ENCODE measurements at regions of chr2 and their contacts with region 1.

Region 1: DNA sequence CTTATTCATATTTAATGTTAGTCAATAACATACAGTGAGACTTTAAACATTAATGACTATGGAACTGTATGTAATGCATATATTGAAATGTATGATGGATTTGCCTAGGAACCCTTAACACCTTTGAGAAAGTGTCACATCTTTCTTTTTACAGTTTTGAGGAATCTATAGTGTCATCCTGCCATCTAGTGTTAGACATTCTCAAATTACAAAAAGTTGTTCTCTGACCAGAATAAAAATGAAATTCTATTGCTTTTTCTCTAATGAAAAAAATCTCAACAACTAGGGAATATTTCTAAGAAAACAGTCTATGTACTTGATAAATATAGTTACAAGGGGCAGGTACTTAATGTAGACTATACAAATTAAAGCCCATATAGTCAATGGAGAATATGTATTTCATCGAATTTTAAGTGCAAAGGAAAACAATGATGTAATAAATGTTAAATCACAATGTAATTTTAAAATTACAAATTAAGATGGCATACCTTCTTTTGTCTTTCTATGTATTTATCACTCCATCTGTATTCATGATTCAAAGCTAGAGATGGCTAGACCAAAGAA is 5.1 kb upstream of the CALCRL start:
- DNase-seq: peak in 1 of 9 experiments; percentile 18
- ATAC-seq: no peak
- H3K4me3 ChIP-seq: no peak overlapping the region
- H3K4me3 Mint-ChIP-seq: no peak overlapping the region
- H3K27ac ChIP-seq: no peak overlapping the region
- H3K27ac Mint-ChIP-seq: no peak overlapping the region
- H3K4me1 ChIP-seq: no peaks in the 10 kb centered on the region
- H3K4me1 Mint-ChIP-seq: peaks cover 3% of the 10 kb centered on the region
- H3K27me3 ChIP-seq: no peaks in the 10 kb centered on the region
- H3K27me3 Mint-ChIP-seq: no peaks in the 10 kb centered on the region
- CTCF ChIP-seq: no peak

Region 2: GRCh38 chr2:186518945-186519344 is 934.2 kb before region 1 on chr2:
- CTCF ChIA-PET with region 1: no interaction called
- POLR2A ChIA-PET with region 1: no interaction called
- intact Hi-C with region 1: loop called in 1 of 2 experiments (anchors 5 kb)
- DNase-seq: no peak
- ATAC-seq: no peak
- H3K4me3 ChIP-seq: no peak overlapping the region
- H3K4me3 Mint-ChIP-seq: no peak overlapping the region
- H3K27ac ChIP-seq: no peak overlapping the region
- H3K27ac Mint-ChIP-seq: peak overlapping the region; percentile 27
- H3K4me1 ChIP-seq: no peaks in the 10 kb centered on the region
- H3K4me1 Mint-ChIP-seq: no peaks in the 10 kb centered on the region
- H3K27me3 ChIP-seq: no peaks in the 10 kb centered on the region
- H3K27me3 Mint-ChIP-seq: no peaks in the 10 kb centered on the region
- CTCF ChIP-seq: no peak

Region 3: GRCh38 chr2:186862869-186863709 is 590.1 kb before region 1 on chr2:
- CTCF ChIA-PET with region 1: no interaction called
- POLR2A ChIA-PET with region 1: no interaction called
- intact Hi-C with region 1: loop called in 1 of 2 experiments (anchors 10 kb)
- DNase-seq: no peak
- ATAC-seq: no peak
- H3K4me3 ChIP-seq: no peak overlapping the region
- H3K4me3 Mint-ChIP-seq: no peak overlapping the region
- H3K27ac ChIP-seq: no peak overlapping the region
- H3K27ac Mint-ChIP-seq: no peak overlapping the region
- H3K4me1 ChIP-seq: no peaks in the 10 kb centered on the region
- H3K4me1 Mint-ChIP-seq: no peaks in the 10 kb centered on the region
- H3K27me3 ChIP-seq: no peaks in the 10 kb centered on the region
- H3K27me3 Mint-ChIP-seq: no peaks in the 10 kb centered on the region
- CTCF ChIP-seq: peak; percentile 29